Upper lobe of right lung (tissue), 1 donor: ENCODE measurements at regions of chr9 and their contacts with region 1.

Region 1: GRCh38 chr9:70639853-70640814 is 225.7 kb upstream of the KLF9 start:
- DNase-seq: no peak
- ATAC-seq: peak; percentile 66
- H3K4me3 ChIP-seq: no peak overlapping the region
- H3K27ac ChIP-seq: no peak overlapping the region
- H3K4me1 ChIP-seq: no peaks in the 10 kb centered on the region
- H3K27me3 ChIP-seq: peaks cover 4% of the 10 kb centered on the region
- CTCF ChIP-seq: peak; percentile 62

Region 2: GRCh38 chr9:70110194-70111041 is 529.7 kb before region 1 on chr9:
- intact Hi-C with region 1: no loop called
- DNase-seq: no peak
- ATAC-seq: no peak
- H3K4me3 ChIP-seq: no peak overlapping the region
- H3K27ac ChIP-seq: no peak overlapping the region
- H3K4me1 ChIP-seq: peaks cover 4% of the 10 kb centered on the region
- H3K27me3 ChIP-seq: no peaks in the 10 kb centered on the region
- CTCF ChIP-seq: no peak

Region 3: GRCh38 chr9:70574151-70574837 is 65.8 kb before region 1 on chr9:
- intact Hi-C with region 1: no loop called
- DNase-seq: no peak
- ATAC-seq: no peak
- H3K4me3 ChIP-seq: no peak overlapping the region
- H3K27ac ChIP-seq: peak overlapping the region; percentile 43
- H3K4me1 ChIP-seq: peaks cover 11% of the 10 kb centered on the region
- H3K27me3 ChIP-seq: no peaks in the 10 kb centered on the region
- CTCF ChIP-seq: no peak

Region 4: DNA sequence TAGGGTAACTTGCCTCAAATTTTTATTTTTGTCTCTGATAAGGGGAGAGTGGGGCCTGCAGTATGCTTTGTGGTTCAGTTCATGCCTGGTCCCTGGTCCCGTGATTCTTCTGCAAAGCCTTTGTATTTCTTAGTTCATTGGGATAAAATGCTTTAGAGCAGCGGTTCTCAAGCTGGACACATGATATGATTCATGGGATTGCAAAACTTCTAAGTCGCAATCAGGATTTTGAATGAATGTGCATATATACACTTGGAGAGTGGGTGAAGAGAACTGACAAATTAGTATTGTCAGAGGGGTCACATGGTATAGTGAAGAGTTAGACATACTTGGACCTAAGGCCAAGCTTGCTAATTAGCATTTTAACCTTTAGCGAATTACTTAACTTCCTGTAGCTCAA is 39.7 kb after region 1 on chr9:
- intact Hi-C with region 1: no loop called
- DNase-seq: no peak
- ATAC-seq: no peak
- H3K4me3 ChIP-seq: no peak overlapping the region
- H3K27ac ChIP-seq: no peak overlapping the region
- H3K4me1 ChIP-seq: no peaks in the 10 kb centered on the region
- H3K27me3 ChIP-seq: no peaks in the 10 kb centered on the region
- CTCF ChIP-seq: no peak

Region 5: GRCh38 chr9:71249729-71250317 is 609.7 kb after region 1 on chr9:
- intact Hi-C with region 1: loop called (anchors 10 kb)
- DNase-seq: no peak
- ATAC-seq: peak; percentile 82
- H3K4me3 ChIP-seq: no peak overlapping the region
- H3K27ac ChIP-seq: no peak overlapping the region
- H3K4me1 ChIP-seq: no peaks in the 10 kb centered on the region
- H3K27me3 ChIP-seq: no peaks in the 10 kb centered on the region
- CTCF ChIP-seq: peak; percentile 65